Ascending aorta (tissue), 2 donors: ENCODE measurements at regions of chr19 and their contacts with region 1.

Region 1: GRCh38 chr19:2168619-2169424 is 5.1 kb downstream of the DOT1L start:
- DNase-seq: peak; percentile 99 to 100
- H3K4me3 ChIP-seq: peak overlapping the region; percentile 31 to 39
- H3K27ac ChIP-seq: peak overlapping the region; percentile 84 to 97
- H3K4me1 ChIP-seq: peaks cover 13 to 46% of the 10 kb centered on the region in 2 donors
- H3K27me3 ChIP-seq: no peaks in the 10 kb centered on the region
- CTCF ChIP-seq: no peak

Region 2: GRCh38 chr19:2070436-2070827 is 98.4 kb before region 1 on chr19:
- intact Hi-C with region 1: no loop called
- DNase-seq: no peak
- H3K4me3 ChIP-seq: no peak overlapping the region
- H3K27ac ChIP-seq: no peak overlapping the region
- H3K4me1 ChIP-seq: peaks cover 0 to 6% of the 10 kb centered on the region in 2 donors
- H3K27me3 ChIP-seq: no peaks in the 10 kb centered on the region
- CTCF ChIP-seq: no peak

Region 3: GRCh38 chr19:2151339-2152229 is 17.2 kb before region 1 on chr19 and contains the start of gene AP3D1:
- intact Hi-C with region 1: loop called (anchors 1 kb)
- DNase-seq: peak; percentile 99 to 100
- H3K4me3 ChIP-seq: peak within 1 kb of the TSS; percentile 82 to 96
- H3K27ac ChIP-seq: peak within 1 kb of the TSS; percentile 83 to 87
- H3K4me1 ChIP-seq: peaks cover 14 to 31% of the 10 kb centered on the region in 2 donors
- H3K27me3 ChIP-seq: no peaks in the 10 kb centered on the region
- CTCF ChIP-seq: peak in 1 of 3 experiments; percentile 38
- total RNA-seq, gene AP3D1: 98.8 TPM

Region 4: DNA sequence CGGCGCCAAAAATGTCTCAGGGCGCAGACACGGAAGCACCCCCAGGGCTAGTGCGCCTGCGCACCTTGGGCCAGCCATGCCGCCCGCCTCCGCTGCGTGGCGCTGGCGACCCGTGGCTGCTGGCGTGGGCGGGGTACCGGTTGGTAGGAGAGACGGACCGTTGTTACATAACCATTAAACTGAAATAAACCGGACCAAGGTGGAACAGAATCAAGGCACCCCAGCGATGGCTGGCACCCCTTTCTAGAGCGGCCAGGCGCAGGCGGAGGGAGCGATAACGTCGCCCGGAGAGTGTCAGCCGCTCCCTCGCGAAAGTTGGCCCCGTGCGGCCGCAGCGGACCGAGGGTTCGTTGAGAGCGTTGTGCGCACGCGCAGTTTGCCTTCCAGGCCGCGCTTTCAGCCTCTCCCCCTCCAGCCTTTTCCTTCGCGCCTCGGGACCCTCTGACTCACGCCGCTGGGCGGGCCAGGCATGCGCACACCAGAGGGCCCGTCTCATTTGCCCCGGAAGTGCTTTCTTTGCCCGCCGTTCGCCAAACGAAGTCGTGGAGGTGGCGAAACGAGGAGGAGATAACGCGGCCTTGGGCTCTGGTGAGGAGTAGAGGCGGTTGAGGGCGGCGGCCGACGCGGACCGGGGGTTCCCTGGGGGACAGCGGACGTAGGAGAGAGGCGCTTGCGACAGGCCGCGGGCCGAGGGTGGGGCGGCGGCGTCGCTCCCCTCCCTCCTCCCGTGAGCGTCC is 67.7 kb after region 1 on chr19 and contains the starts of genes PLEKHJ1 and SF3A2:
- intact Hi-C with region 1: loop called (anchors 1 kb)
- DNase-seq: peak; percentile 86 to 98
- H3K4me3 ChIP-seq: peak within 1 kb of the TSS; percentile 85 to 100
- H3K27ac ChIP-seq: peak within 1 kb of the TSS; percentile 97 to 98
- H3K4me1 ChIP-seq: peaks cover 19 to 44% of the 10 kb centered on the region in 2 donors
- H3K27me3 ChIP-seq: no peaks in the 10 kb centered on the region
- CTCF ChIP-seq: peak; percentile 99 to 100 (median 99)
- total RNA-seq, gene PLEKHJ1: 23.9 TPM
- total RNA-seq, gene SF3A2: 21.3 TPM

Region 5: DNA sequence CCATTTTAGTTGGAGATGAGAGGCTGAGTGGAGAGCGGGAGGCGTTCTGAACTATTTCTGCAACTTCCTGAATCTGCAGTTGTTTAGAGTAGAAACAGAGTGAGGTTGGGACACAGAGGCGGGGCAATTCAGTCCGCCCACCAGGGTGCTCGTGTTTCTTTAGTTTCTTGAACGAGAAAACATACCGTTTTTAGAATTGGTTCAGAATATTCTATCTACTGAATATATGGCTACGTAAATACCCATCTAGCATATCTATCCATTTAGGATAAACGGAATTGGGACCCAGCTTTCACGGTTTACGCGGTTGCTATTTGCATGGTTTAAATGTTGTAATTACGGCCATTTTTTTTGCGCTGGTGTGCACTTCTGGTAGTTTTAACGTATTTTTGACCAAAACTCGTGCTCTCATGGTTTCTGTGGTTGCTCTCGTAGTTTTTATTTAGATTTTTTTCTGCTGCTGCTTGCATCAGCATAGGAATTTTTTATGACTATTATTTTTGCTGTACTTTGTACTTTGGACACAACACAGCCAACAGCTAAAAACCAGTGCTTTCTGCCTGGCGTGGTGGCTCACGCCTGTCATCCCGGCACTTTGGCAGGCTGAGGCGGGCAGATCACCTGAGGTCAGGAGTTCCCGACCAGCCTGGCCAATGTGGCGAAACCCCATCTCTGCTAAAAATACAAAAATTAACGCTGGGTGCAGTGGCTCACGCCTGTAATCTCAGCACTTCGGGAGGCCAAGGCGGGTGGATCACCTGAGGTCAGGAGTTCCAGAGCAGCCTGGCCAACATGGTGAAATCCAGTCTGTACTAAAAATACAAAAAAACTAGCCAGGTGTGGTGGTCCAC is 225.8 kb after region 1 on chr19:
- intact Hi-C with region 1: no loop called
- DNase-seq: no peak
- H3K4me3 ChIP-seq: no peak overlapping the region
- H3K27ac ChIP-seq: peak overlapping the region in 1 of 2 donors; percentile 5
- H3K4me1 ChIP-seq: no peaks in the 10 kb centered on the region
- H3K27me3 ChIP-seq: no peaks in the 10 kb centered on the region
- CTCF ChIP-seq: no peak

Region 6: DNA sequence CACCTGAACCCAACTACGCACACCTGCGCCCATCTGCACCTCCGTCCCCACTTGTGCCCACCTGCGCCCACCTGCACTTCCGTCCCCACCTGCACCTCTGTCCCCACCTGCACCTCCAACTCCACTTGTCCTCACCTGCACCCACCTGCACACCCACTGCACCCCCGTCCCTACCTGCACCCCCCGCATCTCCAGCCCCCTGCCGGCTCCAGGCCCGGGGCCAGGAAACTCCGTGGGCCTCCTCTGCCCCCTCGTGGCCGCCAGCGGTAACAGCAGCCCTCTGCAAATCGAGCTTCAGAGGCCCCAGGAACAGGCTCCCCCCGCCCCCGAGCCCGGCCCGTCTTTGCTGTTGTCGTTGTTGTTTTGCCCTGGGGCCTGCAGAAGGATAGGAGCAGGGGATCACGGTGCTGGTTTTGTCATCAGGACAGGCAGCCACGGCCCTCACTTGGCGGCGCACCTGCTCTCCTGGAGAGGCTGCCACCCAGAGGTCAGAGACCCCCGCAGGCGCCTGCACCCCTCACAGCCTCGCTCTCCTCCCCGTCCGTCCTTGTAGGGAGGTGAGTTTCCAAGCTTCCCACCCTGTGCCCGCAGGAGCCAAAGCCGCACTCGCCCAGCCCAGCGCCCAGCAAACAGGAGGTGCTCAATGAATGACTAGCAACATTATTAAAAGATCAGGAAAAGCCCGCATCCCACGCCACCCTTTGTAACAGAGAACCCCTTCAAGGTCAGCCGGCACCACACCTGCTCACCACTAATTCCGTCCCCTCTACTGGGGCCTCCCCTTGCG is 468.3 kb after region 1 on chr19:
- intact Hi-C with region 1: loop called (anchors 10 kb)
- DNase-seq: no peak
- H3K4me3 ChIP-seq: peak overlapping the region in 1 of 2 donors; percentile 32
- H3K27ac ChIP-seq: no peak overlapping the region
- H3K4me1 ChIP-seq: peaks cover 15 to 23% of the 10 kb centered on the region in 2 donors
- H3K27me3 ChIP-seq: no peaks in the 10 kb centered on the region
- CTCF ChIP-seq: peak; percentile 87 to 98 (median 94)